ENCODE measurements at regions of chr2 and their contacts with region 1.

Region 1: GRCh38 chr2:161160226-161161069 is at the start of gene TANK:
- DNase-seq: peak; percentile 95
- ATAC-seq: peak; percentile 95
- H3K4me3 Mint-ChIP-seq: peak within 1 kb of the TSS; percentile 91
- H3K27ac Mint-ChIP-seq: peak within 1 kb of the TSS; percentile 99
- H3K4me1 Mint-ChIP-seq: peaks cover 52% of the 10 kb centered on the region
- H3K27me3 Mint-ChIP-seq: no peaks in the 10 kb centered on the region
- total RNA-seq, gene TANK: 54.6 to 59.7 TPM

Region 2: GRCh38 chr2:159712143-159712928 is 1448.1 kb before region 1 on chr2 and contains the start of gene MARCHF7:
- CTCF ChIA-PET with region 1: no interaction called
- POLR2A ChIA-PET with region 1: no interaction called
- intact Hi-C with region 1: loop called in 1 of 2 experiments (anchors 2 kb)
- DNase-seq: peak; percentile 98
- ATAC-seq: peak; percentile 96
- H3K4me3 Mint-ChIP-seq: peak within 1 kb of the TSS; percentile 98
- H3K27ac Mint-ChIP-seq: peak within 1 kb of the TSS; percentile 100
- H3K4me1 Mint-ChIP-seq: peaks cover 42% of the 10 kb centered on the region
- H3K27me3 Mint-ChIP-seq: no peaks in the 10 kb centered on the region
- total RNA-seq, gene MARCHF7: 78.3 to 83.1 TPM

Region 3: DNA sequence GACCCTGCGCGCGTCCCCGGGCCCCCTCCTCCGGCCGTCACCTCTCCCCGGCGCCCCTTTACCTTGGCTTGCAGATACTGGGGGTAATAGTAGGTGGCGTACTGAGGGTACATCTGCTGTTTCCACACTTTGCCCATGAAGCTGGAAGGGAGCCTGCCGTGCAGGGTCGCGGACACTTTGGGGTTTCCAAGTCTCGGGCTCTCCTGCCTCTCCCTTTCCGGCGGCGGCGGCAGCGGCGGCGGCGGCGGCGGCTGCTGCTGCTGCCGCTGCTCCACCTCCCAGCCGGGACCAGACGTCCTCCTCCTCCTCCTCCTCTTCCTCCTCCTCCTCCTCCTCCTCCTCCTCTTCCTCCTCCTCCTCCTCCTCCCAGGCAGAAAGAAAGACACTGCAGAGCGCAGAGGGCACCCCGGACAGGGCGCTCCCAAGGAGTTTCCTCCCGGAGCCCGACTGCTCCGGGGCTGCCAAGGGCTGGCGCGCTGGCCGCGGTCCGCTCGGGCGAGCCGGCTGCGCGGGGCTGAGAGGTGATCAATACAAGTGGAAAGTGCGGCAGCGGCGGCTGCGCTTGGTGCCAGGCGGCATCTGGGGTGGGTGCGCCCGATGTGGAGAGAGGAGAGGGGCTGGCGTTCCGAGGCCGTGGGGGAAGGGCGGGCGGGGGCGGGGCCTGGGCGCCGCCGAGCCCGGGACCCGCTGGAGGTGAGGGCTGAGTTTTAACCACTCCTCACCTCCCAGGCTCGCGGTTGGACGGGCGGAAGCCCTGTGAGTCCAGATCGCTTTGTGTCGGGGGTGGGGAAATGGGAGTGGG is 667.0 kb before region 1 on chr2 and contains the start of gene RBMS1:
- CTCF ChIA-PET with region 1: no interaction called
- POLR2A ChIA-PET with region 1: no interaction called
- intact Hi-C with region 1: loop called (anchors 10 kb)
- DNase-seq: peak; percentile 70
- ATAC-seq: peak; percentile 31
- H3K4me3 Mint-ChIP-seq: peak within 1 kb of the TSS; percentile 91
- H3K27ac Mint-ChIP-seq: peak within 1 kb of the TSS; percentile 65
- H3K4me1 Mint-ChIP-seq: peaks cover 48% of the 10 kb centered on the region
- H3K27me3 Mint-ChIP-seq: peaks cover 2% of the 10 kb centered on the region
- total RNA-seq, gene RBMS1: 39.3 to 47.7 TPM

Region 4: DNA sequence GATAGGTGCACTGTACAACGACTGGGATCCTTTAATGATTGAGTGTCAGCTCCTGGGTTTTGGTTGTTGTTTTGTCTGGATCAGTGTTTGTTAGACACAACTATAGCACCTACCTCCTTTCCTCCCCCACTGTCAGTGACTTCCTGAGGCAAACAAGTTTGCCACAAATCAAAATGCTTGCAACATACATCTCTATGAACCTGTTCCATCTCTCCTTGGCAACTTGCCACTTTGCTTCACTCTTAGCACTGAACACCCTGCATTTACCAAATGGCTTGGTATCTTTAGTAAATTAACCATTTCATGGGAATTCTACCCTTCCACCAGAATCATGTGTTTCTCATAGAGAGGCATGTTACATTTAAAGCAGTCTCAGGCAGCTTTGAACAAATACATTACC is 301.4 kb before region 1 on chr2:
- CTCF ChIA-PET with region 1: no interaction called
- POLR2A ChIA-PET with region 1: no interaction called
- intact Hi-C with region 1: no loop called
- DNase-seq: no peak
- ATAC-seq: no peak
- H3K4me3 Mint-ChIP-seq: no peak overlapping the region
- H3K27ac Mint-ChIP-seq: no peak overlapping the region
- H3K4me1 Mint-ChIP-seq: peaks cover 6% of the 10 kb centered on the region
- H3K27me3 Mint-ChIP-seq: no peaks in the 10 kb centered on the region

Region 5: DNA sequence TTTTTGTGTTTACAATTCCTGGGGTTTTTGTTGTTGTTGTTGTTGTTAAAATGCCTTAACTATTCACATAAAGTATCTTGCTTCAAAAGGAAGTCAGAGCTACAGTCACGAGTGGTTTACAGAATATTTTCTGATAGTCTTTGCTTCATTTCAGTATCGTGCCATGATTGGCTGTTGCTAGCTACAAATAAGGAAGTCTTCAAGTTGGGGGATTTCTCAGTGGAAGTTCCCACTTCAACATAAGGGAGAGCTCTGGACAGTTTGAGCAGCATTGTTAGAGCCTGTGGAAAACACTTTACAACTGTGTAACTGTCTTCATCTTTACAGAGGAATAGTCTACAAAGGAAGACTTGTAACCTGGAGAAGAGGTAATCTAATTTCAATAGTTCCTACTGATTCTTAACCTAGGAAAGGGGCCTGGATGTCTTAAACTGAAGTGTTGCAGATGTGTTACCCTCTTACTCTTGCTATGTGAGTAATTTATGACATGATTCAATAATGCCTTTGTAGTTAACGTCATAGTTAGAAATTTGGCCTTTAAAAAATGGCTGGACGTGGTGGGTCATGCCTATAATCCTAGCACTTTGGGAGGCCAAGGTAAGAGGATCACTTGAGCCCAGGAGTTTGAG is 23.6 kb before region 1 on chr2:
- CTCF ChIA-PET with region 1: interaction called, 4 read pairs
- POLR2A ChIA-PET with region 1: no interaction called
- intact Hi-C with region 1: loop called (anchors 1 kb)
- DNase-seq: peak; percentile 30
- ATAC-seq: peak; percentile 82
- H3K4me3 Mint-ChIP-seq: peak overlapping the region; percentile 83
- H3K27ac Mint-ChIP-seq: peak overlapping the region; percentile 98
- H3K4me1 Mint-ChIP-seq: peaks cover 52% of the 10 kb centered on the region
- H3K27me3 Mint-ChIP-seq: no peaks in the 10 kb centered on the region

Region 6: GRCh38 chr2:161177969-161178368 is 17.5 kb after region 1 on chr2:
- CTCF ChIA-PET with region 1: no interaction called
- POLR2A ChIA-PET with region 1: no interaction called
- intact Hi-C with region 1: no loop called
- DNase-seq: no peak
- ATAC-seq: no peak
- H3K4me3 Mint-ChIP-seq: no peak overlapping the region
- H3K27ac Mint-ChIP-seq: no peak overlapping the region
- H3K4me1 Mint-ChIP-seq: peaks cover 33% of the 10 kb centered on the region
- H3K27me3 Mint-ChIP-seq: no peaks in the 10 kb centered on the region

Region 7: DNA sequence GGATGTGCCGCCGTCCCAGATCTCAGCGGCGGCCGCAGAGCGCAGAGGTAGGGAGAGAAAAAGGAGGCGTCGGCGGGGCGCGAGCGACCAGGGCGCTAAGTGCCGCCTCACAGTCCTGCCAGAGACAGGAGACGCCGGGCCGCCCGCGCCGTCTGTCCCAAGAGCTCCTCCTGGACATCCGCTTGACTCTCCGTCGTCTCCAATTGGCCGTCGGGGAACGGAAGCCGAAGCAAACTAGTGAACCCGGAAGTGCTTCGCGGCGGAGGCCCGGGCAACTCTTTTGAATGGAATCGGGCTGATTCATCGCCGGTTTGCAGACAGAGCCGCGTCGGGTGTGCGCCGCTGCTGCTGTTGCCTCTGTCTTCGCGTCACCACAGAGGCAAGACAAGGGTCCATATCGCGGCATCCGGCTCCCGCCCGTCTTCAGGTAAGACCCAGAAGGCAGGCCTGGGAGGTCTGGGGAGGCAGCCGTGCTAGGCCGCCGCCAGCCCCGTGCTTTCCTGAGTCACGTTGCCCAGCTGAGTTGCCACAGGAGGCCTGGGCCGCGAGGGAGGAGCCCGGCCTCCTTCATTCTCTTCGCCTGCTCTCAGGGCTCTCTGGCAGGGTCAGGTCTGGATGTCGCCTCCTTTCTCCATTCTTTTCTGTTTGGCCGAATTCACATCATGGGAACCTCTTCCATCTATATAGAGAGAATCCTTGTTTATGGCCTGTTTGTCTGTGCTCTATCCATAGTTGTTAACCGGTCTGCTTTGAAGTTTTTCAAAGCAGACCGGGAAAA is 147.9 kb after region 1 on chr2 and contains the start of gene PSMD14:
- CTCF ChIA-PET with region 1: no interaction called
- POLR2A ChIA-PET with region 1: no interaction called
- intact Hi-C with region 1: loop called in 1 of 2 experiments (anchors 1 kb)
- DNase-seq: peak; percentile 96
- ATAC-seq: peak; percentile 91
- H3K4me3 Mint-ChIP-seq: peak within 1 kb of the TSS; percentile 87
- H3K27ac Mint-ChIP-seq: peak within 1 kb of the TSS; percentile 93
- H3K4me1 Mint-ChIP-seq: peaks cover 28% of the 10 kb centered on the region
- H3K27me3 Mint-ChIP-seq: no peaks in the 10 kb centered on the region
- total RNA-seq, gene PSMD14: 69.5 to 85.7 TPM

Region 8: GRCh38 chr2:161332371-161332967 is 172.0 kb after region 1 on chr2:
- CTCF ChIA-PET with region 1: no interaction called
- POLR2A ChIA-PET with region 1: no interaction called
- intact Hi-C with region 1: no loop called
- DNase-seq: no peak
- ATAC-seq: no peak
- H3K4me3 Mint-ChIP-seq: no peak overlapping the region
- H3K27ac Mint-ChIP-seq: no peak overlapping the region
- H3K4me1 Mint-ChIP-seq: peaks cover 3% of the 10 kb centered on the region
- H3K27me3 Mint-ChIP-seq: no peaks in the 10 kb centered on the region

Measured in activated CD4-positive, alpha-beta T cell treated with anti-CD3 and anti-CD28 coated beads for 36 hours (primary cell).